ENCODE measurements at regions of chr5 and their contacts with region 1.

Region 1: GRCh38 chr5:78527054-78527859 is 121.3 kb downstream of the LHFPL2 start:
- DNase-seq: peak in 1 of 2 donors; percentile 90
- ATAC-seq: peak; percentile 93
- H3K4me3 ChIP-seq: no peak overlapping the region
- H3K27ac ChIP-seq: peak overlapping the region in 1 of 2 donors; percentile 67
- H3K4me1 ChIP-seq: peaks cover 0 to 9% of the 10 kb centered on the region in 2 donors
- H3K27me3 ChIP-seq: no peaks in the 10 kb centered on the region

Region 2: GRCh38 chr5:78213799-78214198 is 313.5 kb before region 1 on chr5:
- intact Hi-C with region 1: no loop called
- DNase-seq: no peak
- ATAC-seq: no peak
- H3K4me3 ChIP-seq: no peak overlapping the region
- H3K27ac ChIP-seq: no peak overlapping the region
- H3K4me1 ChIP-seq: no peaks in the 10 kb centered on the region
- H3K27me3 ChIP-seq: no peaks in the 10 kb centered on the region

Region 3: GRCh38 chr5:78506261-78507024 is 20.8 kb before region 1 on chr5:
- intact Hi-C with region 1: loop called in 1 of 2 experiments (anchors 2 kb)
- DNase-seq: no peak
- ATAC-seq: no peak
- H3K4me3 ChIP-seq: no peak overlapping the region
- H3K27ac ChIP-seq: no peak overlapping the region
- H3K4me1 ChIP-seq: peaks cover 4% of the 10 kb centered on the region in 2 donors
- H3K27me3 ChIP-seq: no peaks in the 10 kb centered on the region

Region 4: GRCh38 chr5:78747705-78748359 is 220.6 kb after region 1 on chr5:
- intact Hi-C with region 1: loop called (anchors 10 kb)
- DNase-seq: no peak
- ATAC-seq: peak; percentile 88
- H3K4me3 ChIP-seq: no peak overlapping the region
- H3K27ac ChIP-seq: peak overlapping the region; percentile 83 to 96
- H3K4me1 ChIP-seq: peaks cover 3 to 10% of the 10 kb centered on the region in 2 donors
- H3K27me3 ChIP-seq: no peaks in the 10 kb centered on the region

Measured in aorta (tissue), 5 donors.